ENCODE measurements at regions of chr18 and their contacts with region 1.

Region 1: DNA sequence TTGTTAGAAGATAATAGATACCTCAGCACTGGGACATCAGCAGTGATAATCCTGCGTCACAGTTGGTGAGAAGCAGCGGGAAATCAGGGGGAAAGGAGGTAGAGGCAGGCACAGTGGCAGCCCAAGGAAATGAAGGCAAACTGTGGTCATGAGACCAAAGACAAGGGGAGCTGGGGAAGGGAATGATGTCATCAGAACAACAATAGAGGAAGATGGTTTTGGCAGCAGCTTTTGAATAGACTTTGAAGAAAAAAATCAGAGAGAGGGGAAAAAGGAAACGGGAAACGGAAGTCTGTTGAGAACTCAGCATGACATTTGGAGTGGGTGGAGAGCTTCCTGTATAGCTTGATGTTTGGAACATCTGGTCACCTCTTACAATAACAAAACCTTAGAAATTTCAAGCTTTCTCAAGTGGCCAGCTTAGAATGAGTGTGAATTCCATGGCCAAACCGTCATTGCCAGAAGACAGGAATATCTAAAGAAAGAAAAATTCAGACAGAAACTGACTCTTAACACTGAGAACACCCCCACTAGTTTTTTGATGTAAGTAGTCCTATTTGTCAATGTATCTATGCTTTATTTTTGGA is 18.4 kb upstream of the YES1 start:
- DNase-seq: peak; percentile 78
- H3K4me3 Mint-ChIP-seq: peak overlapping the region; percentile 32
- H3K27ac Mint-ChIP-seq: peak overlapping the region; percentile 75
- H3K4me1 Mint-ChIP-seq: peaks cover 25% of the 10 kb centered on the region
- H3K27me3 Mint-ChIP-seq: peaks cover 9% of the 10 kb centered on the region

Region 2: DNA sequence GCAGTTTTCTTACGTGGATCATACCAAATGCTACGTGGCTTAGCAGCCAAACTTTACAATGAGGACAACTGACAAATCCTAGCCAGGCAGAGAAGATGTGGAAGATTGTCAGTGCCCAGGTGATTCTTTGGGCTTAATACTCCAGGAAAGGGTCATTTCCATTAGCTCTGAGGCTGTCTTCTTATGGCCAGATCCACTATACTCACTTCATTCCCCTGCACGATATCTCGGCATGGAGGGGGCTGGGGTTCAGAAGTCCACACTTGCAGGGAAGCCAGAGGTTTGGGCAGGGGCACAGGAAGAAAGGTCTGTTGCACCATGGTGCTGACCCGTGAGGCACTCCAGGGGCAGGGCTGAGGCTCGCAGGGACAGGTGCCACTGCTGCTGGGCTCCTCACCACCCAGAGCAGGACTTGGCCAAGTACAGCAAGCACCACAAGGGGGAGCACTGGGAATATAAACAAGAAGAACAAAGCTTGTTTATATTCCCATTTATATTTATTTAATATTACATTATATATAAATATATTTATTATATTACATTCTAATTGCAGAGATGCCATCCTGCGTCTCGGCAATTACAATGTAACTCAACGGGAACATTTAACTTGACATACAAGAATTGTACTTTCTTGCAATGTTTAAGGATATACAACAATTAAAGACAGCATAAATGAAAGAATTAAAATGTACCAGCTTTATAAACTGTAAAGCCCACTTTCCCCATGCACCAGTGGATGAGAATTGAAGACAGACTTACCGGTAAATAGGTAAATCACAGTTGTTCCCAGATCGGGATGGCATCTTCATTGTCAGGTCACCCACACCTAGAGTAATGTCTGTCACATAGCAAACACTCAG is 206.4 kb before region 1 on chr18:
- intact Hi-C with region 1: loop called (anchors 1 kb)
- DNase-seq: peak; percentile 89
- H3K4me3 Mint-ChIP-seq: no peak overlapping the region
- H3K27ac Mint-ChIP-seq: no peak overlapping the region
- H3K4me1 Mint-ChIP-seq: peaks cover 2% of the 10 kb centered on the region
- H3K27me3 Mint-ChIP-seq: peaks cover 41% of the 10 kb centered on the region

Region 3: DNA sequence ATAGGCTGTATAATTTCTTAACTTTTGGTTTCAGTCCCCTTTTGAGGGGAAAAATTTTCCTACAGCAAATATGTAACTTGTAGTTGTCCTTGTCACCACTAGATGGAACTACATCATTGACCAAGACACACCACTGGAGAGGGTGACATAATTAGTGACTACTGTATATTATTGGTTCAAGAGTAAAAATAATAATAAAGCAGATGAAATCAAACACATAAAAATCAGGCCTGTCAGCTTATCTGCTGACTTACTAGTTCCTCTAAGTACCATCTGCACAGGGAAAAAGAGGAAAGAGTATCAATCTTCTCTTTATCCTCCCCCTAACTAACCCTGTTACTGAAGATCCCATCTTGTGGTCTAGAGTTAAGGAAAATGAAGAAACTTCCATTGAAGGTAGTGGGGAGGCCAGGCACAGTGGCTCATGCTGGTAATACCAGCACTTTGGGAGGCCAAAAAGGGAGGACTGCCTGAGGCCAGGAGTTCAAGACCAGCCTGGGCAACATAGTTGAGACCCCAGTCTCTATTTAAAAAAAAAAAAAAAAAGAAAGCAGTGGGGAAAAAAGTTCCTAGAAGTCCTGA is 88.4 kb before region 1 on chr18:
- intact Hi-C with region 1: loop called (anchors 1 kb)
- DNase-seq: peak; percentile 67
- H3K4me3 Mint-ChIP-seq: no peak overlapping the region
- H3K27ac Mint-ChIP-seq: no peak overlapping the region
- H3K4me1 Mint-ChIP-seq: peaks cover 1% of the 10 kb centered on the region
- H3K27me3 Mint-ChIP-seq: no peaks in the 10 kb centered on the region

Region 4: DNA sequence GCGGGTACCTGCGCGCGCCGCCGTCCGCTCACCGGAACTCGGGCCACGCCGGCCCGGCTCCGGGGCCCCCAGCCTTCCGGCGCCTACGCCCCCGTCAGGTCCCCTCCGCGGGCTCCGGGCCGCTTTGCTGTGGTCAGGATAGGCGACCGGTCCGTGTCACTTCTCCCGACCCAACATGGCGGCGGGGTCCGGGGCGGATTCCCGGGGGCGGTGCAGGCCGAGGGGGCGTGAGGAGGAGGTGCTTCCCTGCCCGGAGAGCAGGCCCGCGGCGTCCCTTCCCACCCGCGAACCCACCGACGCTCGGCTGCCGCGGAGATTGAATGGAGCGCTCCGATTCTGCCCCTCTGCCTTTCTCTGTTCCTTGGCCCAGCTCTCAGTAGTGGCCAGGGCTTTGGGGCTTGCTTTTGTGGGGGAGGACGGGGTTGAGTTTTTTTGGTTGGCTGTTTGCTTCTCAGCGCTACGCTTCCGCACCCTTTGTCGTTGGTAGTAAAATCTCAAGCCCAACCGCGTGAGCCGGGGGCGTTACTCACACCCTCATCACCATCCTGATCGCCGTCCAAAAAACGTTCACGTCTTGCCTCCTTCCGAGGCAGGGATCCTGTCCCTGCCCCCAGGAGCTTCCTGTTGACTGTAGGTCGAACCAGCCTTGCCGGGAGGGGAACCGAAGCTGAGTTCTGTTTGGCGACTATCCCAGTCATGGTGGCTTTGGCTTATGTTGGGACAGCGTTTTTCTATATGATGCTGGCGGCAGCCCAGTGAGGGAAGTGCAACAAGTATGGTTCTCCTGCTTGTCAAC is 17.8 kb before region 1 on chr18:
- intact Hi-C with region 1: loop called (anchors 1 kb)
- DNase-seq: peak; percentile 95
- H3K4me3 Mint-ChIP-seq: peak overlapping the region; percentile 97
- H3K27ac Mint-ChIP-seq: peak overlapping the region; percentile 100
- H3K4me1 Mint-ChIP-seq: peaks cover 65% of the 10 kb centered on the region
- H3K27me3 Mint-ChIP-seq: peaks cover 3% of the 10 kb centered on the region